Sigmoid colon (tissue), 7 donors: ENCODE measurements at regions of chr5 and their contacts with region 1.

Region 1: GRCh38 chr5:95858661-95859326 is 36.3 kb upstream of the GLRX start:
- DNase-seq: peak; percentile 96
- H3K4me3 ChIP-seq: peak overlapping the region in 3 of 4 donors; percentile 16 to 33 (median 30)
- H3K27ac ChIP-seq: peak overlapping the region; percentile 72 to 83 (median 80)
- H3K4me1 ChIP-seq: peaks cover 0 to 31% (median 23%) of the 10 kb centered on the region in 4 donors
- H3K27me3 ChIP-seq: no peaks in the 10 kb centered on the region
- CTCF ChIP-seq: peak; percentile 96 to 98 (median 98)
- EP300 ChIP-seq: peak in 2 of 4 donors; percentile 58 to 84
- POLR2A ChIP-seq: no peak

Region 2: GRCh38 chr5:96336351-96336985 is 477.7 kb after region 1 on chr5:
- intact Hi-C with region 1: loop called (anchors 1 kb)
- DNase-seq: peak; percentile 81
- H3K4me3 ChIP-seq: peak overlapping the region in 1 of 4 donors; percentile 20
- H3K27ac ChIP-seq: no peak overlapping the region
- H3K4me1 ChIP-seq: peaks cover 0 to 13% (median 4%) of the 10 kb centered on the region in 4 donors
- H3K27me3 ChIP-seq: no peaks in the 10 kb centered on the region
- CTCF ChIP-seq: peak; percentile 45 to 83 (median 80)
- EP300 ChIP-seq: no peak
- POLR2A ChIP-seq: no peak

Region 3: GRCh38 chr5:96601811-96602244 is 743.0 kb after region 1 on chr5:
- intact Hi-C with region 1: loop called (anchors 5 kb)
- DNase-seq: no peak
- H3K4me3 ChIP-seq: no peak overlapping the region
- H3K27ac ChIP-seq: no peak overlapping the region
- H3K4me1 ChIP-seq: no peaks in the 10 kb centered on the region
- H3K27me3 ChIP-seq: no peaks in the 10 kb centered on the region
- CTCF ChIP-seq: peak; percentile 37 to 75 (median 59)
- EP300 ChIP-seq: no peak
- POLR2A ChIP-seq: no peak